ENCODE measurements at regions of chr22 and their contacts with region 1.

Region 1: GRCh38 chr22:23838681-23839468 is at the start of gene DERL3:
- DNase-seq: peak; percentile 99
- H3K4me3 ChIP-seq: peak within 1 kb of the TSS; percentile 42 to 70
- H3K27ac ChIP-seq: peak within 1 kb of the TSS; percentile 4 to 28
- H3K4me1 ChIP-seq: peaks cover 26 to 32% of the 10 kb centered on the region in 2 donors
- H3K27me3 ChIP-seq: no peaks in the 10 kb centered on the region
- CTCF ChIP-seq: no peak
- total RNA-seq, gene DERL3: 7.5 TPM

Region 2: DNA sequence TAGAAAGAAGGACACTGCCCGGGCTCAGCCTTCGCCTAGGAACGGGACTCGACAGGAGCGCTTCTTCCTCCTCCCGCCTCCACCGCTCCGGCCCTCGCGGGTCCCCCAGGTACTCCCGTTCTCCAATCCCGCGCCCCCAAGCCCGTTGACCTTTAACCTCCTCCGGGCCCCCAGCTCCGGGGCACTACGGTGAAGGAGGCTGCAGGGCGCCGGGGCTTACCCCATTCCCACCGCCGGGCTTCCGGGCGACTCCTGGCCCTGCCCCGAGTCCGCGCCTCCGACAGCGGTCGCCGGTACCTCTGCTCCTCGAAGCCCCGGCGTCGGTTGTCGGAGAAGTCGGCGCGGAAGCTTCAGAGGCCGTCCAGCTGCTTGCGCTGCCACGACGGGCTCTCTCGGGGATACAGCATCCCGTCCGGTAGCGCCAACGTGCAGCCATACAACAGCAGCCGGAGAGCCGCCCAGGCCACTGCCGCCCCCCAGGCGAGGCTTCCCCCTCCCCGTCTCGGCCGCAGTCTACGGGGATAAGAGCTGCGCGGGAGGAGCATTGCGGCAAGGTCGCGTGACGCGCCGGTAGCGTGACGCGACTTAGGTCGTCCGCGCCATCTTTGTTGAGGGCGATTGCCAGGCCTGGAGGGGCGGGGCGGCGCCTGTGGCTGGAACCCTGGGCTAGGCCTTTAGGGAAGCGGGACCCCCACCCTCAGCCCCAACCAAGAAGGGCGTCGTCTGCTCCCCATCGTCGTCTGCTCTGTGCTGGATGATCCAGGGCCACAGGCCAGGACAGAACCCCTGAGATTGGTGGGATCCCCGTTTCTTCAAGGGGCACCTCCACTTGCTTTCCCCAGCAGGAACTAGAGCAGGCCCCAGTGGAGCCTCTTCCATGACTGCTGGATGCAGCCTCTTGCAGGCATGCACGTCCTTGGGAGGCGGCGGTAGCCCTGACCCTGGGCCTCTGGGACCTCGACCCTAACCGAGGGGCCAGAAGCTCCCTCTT is 121.8 kb before region 1 on chr22:
- intact Hi-C with region 1: loop called (anchors 5 kb)
- DNase-seq: peak; percentile 38 to 89
- H3K4me3 ChIP-seq: peak overlapping the region; percentile 62 to 83
- H3K27ac ChIP-seq: peak overlapping the region; percentile 42 to 63
- H3K4me1 ChIP-seq: peaks cover 0 to 16% of the 10 kb centered on the region in 2 donors
- H3K27me3 ChIP-seq: no peaks in the 10 kb centered on the region
- CTCF ChIP-seq: no peak

Region 3: GRCh38 chr22:23767673-23768548 is 71.0 kb before region 1 on chr22 and contains the start of gene CHCHD10:
- intact Hi-C with region 1: loop called (anchors 2 kb)
- DNase-seq: peak; percentile 35 to 89
- H3K4me3 ChIP-seq: peak within 1 kb of the TSS; percentile 70 to 75
- H3K27ac ChIP-seq: peak within 1 kb of the TSS; percentile 71 to 74
- H3K4me1 ChIP-seq: peaks cover 7 to 26% of the 10 kb centered on the region in 2 donors
- H3K27me3 ChIP-seq: no peaks in the 10 kb centered on the region
- CTCF ChIP-seq: peak; percentile 77 to 84 (median 82)
- total RNA-seq, gene CHCHD10: 2.0 TPM

Region 4: DNA sequence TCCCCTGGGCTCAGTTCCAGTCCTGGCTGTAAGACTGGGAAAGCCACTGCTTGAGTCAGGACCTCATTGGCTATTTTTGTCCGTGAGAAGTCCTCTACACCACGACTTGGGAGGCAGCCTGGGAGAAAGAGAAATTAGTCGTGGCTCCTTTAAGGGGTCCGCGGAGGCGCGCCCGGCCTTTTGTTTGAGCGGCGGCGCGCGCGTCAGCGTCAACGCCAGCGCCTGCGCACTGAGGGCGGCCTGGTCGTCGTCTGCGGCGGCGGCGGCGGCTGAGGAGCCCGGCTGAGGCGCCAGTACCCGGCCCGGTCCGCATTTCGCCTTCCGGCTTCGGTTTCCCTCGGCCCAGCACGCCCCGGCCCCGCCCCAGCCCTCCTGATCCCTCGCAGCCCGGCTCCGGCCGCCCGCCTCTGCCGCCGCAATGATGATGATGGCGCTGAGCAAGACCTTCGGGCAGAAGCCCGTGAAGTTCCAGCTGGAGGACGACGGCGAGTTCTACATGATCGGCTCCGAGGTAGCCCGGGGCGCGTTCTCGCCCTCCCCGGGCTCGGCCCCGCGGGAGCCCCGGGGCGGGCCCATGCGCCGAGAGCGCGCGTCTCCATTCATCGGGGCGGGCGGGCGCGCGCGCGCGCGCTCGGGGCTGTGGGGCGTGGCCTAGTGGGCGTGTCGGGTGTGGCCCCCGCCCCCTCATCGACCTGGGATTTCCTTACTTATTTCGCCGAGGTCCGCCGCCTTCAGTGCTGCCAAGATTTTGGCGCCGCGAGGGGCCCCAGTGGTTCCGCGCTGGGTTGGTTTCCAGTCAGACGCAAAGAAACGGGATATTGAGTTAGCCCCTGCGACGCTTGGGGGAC is 51.9 kb before region 1 on chr22 and contains the start of gene SMARCB1:
- intact Hi-C with region 1: loop called (anchors 1 kb)
- DNase-seq: peak; percentile 79 to 97
- H3K4me3 ChIP-seq: peak within 1 kb of the TSS; percentile 93 to 99
- H3K27ac ChIP-seq: peak within 1 kb of the TSS; percentile 99 to 100
- H3K4me1 ChIP-seq: peaks cover 4 to 10% of the 10 kb centered on the region in 2 donors
- H3K27me3 ChIP-seq: no peaks in the 10 kb centered on the region
- CTCF ChIP-seq: no peak
- total RNA-seq, gene SMARCB1: 22.1 TPM

Region 5: DNA sequence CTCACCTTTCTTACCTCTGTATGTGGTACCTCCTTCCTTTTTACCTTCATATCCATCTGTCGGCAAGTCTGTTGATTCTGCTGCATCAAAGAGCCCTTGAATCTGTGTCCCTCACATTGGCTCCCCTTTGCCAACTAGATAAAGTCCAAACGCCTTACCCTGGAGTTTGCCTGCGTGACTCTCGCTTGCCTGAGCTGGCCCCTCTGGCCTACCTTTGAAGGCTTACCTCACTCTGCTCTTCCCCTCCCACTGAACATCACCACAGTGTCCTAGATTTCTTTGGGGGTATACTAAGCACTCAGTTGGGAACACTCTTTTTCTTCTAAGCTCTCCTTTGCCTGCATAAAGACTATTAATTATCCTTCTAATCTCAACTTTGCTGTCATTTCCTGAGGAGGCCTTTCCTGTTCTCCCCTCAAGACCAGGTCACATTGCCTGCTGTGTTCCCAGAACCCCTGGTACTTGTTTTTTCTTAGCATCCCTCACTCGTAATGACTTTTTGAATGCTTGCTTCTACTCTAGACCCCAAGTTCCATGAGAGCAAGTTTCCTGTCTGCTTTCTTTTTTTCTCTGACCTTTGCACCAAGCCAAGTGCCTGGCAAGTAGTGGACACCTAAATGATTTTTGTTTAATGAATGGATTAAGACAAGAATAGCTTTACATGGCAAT is 520.7 kb after region 1 on chr22:
- intact Hi-C with region 1: no loop called
- DNase-seq: no peak
- H3K4me3 ChIP-seq: no peak overlapping the region
- H3K27ac ChIP-seq: no peak overlapping the region
- H3K4me1 ChIP-seq: no peaks in the 10 kb centered on the region
- H3K27me3 ChIP-seq: no peaks in the 10 kb centered on the region
- CTCF ChIP-seq: no peak

Measured in ascending aorta (tissue), 2 donors.